ENCODE measurements at regions of chr2 and their contacts with region 1.

Region 1: DNA sequence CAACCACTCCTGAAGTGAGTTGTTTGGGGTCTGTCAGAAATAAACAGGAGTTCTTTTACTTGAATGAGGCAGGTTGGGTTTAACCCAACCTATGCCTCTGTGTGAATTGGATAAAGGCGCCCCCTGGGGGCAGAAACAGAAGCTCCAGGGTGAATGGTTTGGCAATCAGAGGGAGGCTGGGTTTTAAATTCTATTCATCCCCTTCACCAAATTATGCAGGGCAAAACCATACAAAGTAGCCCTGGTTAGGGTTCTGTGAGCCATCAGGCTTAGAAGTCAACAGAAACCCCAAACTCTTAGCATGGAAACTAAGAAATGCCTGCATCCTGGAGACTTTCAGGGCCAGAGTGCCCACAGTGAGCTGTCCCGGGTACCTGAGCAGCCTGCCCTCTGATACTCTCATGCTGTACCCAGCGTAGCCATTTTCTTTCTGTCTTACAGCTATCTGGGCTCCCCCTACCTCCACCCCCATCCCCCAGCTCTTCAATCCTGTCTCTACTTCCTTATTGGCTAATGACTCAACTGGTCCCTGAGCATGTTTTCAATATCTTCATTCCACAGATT is 241.5 kb downstream of the ICOS start:
- DNase-seq: peak; percentile 85
- ATAC-seq: peak; percentile 89
- H3K4me3 Mint-ChIP-seq: no peak overlapping the region
- H3K27ac Mint-ChIP-seq: no peak overlapping the region
- H3K4me1 Mint-ChIP-seq: no peaks in the 10 kb centered on the region
- H3K27me3 Mint-ChIP-seq: peaks cover 8% of the 10 kb centered on the region
- CTCF ChIP-seq: peak; percentile 75

Region 2: GRCh38 chr2:204072443-204073324 is 105.4 kb before region 1 on chr2:
- CTCF ChIA-PET with region 1: interaction called, 83 read pairs
- POLR2A ChIA-PET with region 1: interaction called, 3 read pairs
- intact Hi-C with region 1: loop called (anchors 2 kb)
- DNase-seq: peak; percentile 82
- ATAC-seq: peak; percentile 79
- H3K4me3 Mint-ChIP-seq: no peak overlapping the region
- H3K27ac Mint-ChIP-seq: no peak overlapping the region
- H3K4me1 Mint-ChIP-seq: peaks cover 2% of the 10 kb centered on the region
- H3K27me3 Mint-ChIP-seq: peaks cover 7% of the 10 kb centered on the region
- CTCF ChIP-seq: peak; percentile 93

Region 3: DNA sequence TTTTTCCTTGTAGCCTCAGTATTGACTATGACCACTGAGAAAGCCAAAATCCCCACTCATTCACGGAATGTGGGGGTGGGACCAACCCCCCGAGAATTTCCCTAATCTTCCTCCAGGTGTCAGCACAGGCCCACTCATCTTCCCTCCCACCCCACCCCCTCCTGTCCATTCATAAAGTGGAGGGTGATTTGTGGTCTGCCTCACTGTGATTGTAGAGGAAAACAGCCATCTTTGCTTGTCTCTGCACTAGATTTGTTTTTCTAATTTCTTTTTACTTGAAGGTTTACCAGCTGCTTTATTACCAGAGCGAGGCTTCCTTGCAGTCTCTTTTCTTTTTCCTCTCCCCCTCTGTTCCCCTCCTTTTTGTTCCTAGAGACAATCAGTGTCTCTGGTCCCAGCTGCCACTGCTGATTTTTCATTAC is 69.7 kb before region 1 on chr2:
- CTCF ChIA-PET with region 1: interaction called, 82 read pairs
- POLR2A ChIA-PET with region 1: no interaction called
- intact Hi-C with region 1: loop called (anchors 1 kb)
- DNase-seq: peak; percentile 73
- ATAC-seq: peak; percentile 49
- H3K4me3 Mint-ChIP-seq: peak overlapping the region; percentile 62
- H3K27ac Mint-ChIP-seq: peak overlapping the region; percentile 92
- H3K4me1 Mint-ChIP-seq: peaks cover 78% of the 10 kb centered on the region
- H3K27me3 Mint-ChIP-seq: peaks cover 4% of the 10 kb centered on the region
- CTCF ChIP-seq: peak; percentile 89

Region 4: DNA sequence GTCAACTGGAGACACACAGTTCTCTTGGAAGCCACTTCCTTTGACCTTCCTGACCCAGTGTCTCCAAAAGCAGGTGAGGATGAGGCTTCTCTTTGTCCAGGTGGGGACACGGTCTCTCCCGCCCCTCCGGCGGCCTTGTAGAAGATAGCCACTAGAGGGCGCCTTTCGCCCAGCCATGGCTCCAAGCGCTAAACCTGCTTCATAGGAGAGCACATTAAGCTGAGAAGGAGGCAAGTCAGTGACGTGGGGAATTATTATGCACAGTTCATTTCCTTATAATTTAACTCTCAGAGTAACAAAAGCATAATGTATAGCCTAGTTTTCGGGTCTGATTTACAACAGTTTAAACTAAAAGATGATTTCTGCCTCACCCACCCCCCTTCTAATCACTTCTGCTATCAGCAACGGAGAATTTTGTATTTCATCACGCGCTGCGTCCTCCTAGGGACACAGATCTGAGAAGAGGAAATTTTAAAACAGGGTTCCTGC is 32.8 kb before region 1 on chr2:
- CTCF ChIA-PET with region 1: interaction called, 44 read pairs
- POLR2A ChIA-PET with region 1: interaction called, 3 read pairs
- intact Hi-C with region 1: loop called (anchors 5 kb)
- DNase-seq: peak; percentile 88
- ATAC-seq: peak; percentile 98
- H3K4me3 Mint-ChIP-seq: peak overlapping the region; percentile 70
- H3K27ac Mint-ChIP-seq: peak overlapping the region; percentile 58
- H3K4me1 Mint-ChIP-seq: peaks cover 5% of the 10 kb centered on the region
- H3K27me3 Mint-ChIP-seq: peaks cover 26% of the 10 kb centered on the region
- CTCF ChIP-seq: peak; percentile 90

Region 5: DNA sequence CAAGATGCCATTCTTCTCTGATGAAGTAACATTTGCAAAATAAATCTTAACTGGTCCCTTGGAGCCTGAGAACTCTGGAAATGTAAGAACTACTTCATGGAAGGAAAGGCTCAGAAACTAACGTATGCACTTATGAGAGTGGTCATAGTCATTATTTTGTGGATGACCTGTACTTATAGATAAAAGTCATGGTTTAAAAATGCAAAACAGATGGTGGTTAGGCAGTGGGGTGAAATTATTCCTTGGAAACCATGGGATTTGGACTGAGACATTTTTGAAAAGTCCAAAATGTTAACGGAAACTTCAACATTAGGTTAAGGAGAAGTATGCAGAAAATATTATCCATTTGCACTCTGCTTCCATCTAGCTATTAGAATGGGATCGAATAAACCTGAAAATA is 18.5 kb before region 1 on chr2:
- CTCF ChIA-PET with region 1: interaction called, 44 read pairs
- POLR2A ChIA-PET with region 1: no interaction called
- intact Hi-C with region 1: no loop called
- DNase-seq: no peak
- ATAC-seq: no peak
- H3K4me3 Mint-ChIP-seq: no peak overlapping the region
- H3K27ac Mint-ChIP-seq: no peak overlapping the region
- H3K4me1 Mint-ChIP-seq: no peaks in the 10 kb centered on the region
- H3K27me3 Mint-ChIP-seq: peaks cover 4% of the 10 kb centered on the region
- CTCF ChIP-seq: no peak

Region 6: GRCh38 chr2:204195498-204195897 is 17.4 kb after region 1 on chr2:
- CTCF ChIA-PET with region 1: interaction called, 13 read pairs
- POLR2A ChIA-PET with region 1: no interaction called
- intact Hi-C with region 1: no loop called
- DNase-seq: no peak
- ATAC-seq: no peak
- H3K4me3 Mint-ChIP-seq: no peak overlapping the region
- H3K27ac Mint-ChIP-seq: no peak overlapping the region
- H3K4me1 Mint-ChIP-seq: no peaks in the 10 kb centered on the region
- H3K27me3 Mint-ChIP-seq: peaks cover 9% of the 10 kb centered on the region
- CTCF ChIP-seq: no peak

Region 7: GRCh38 chr2:204260162-204260877 is 82.3 kb after region 1 on chr2:
- CTCF ChIA-PET with region 1: interaction called, 10 read pairs
- POLR2A ChIA-PET with region 1: no interaction called
- intact Hi-C with region 1: no loop called
- DNase-seq: peak; percentile 73
- ATAC-seq: peak; percentile 24
- H3K4me3 Mint-ChIP-seq: no peak overlapping the region
- H3K27ac Mint-ChIP-seq: no peak overlapping the region
- H3K4me1 Mint-ChIP-seq: no peaks in the 10 kb centered on the region
- H3K27me3 Mint-ChIP-seq: peaks cover 26% of the 10 kb centered on the region
- CTCF ChIP-seq: peak; percentile 72

Region 8: GRCh38 chr2:204353823-204354222 is 175.8 kb after region 1 on chr2:
- CTCF ChIA-PET with region 1: no interaction called
- POLR2A ChIA-PET with region 1: no interaction called
- intact Hi-C with region 1: no loop called
- DNase-seq: no peak
- ATAC-seq: no peak
- H3K4me3 Mint-ChIP-seq: no peak overlapping the region
- H3K27ac Mint-ChIP-seq: no peak overlapping the region
- H3K4me1 Mint-ChIP-seq: no peaks in the 10 kb centered on the region
- H3K27me3 Mint-ChIP-seq: peaks cover 6% of the 10 kb centered on the region
- CTCF ChIP-seq: no peak

Measured in activated CD8-positive, alpha-beta T cell treated with anti-CD3 and anti-CD28 coated beads for 36 hours (primary cell).